PC-9 (cell line): ENCODE measurements at regions of chr1 and their contacts with region 1.

Region 1: DNA sequence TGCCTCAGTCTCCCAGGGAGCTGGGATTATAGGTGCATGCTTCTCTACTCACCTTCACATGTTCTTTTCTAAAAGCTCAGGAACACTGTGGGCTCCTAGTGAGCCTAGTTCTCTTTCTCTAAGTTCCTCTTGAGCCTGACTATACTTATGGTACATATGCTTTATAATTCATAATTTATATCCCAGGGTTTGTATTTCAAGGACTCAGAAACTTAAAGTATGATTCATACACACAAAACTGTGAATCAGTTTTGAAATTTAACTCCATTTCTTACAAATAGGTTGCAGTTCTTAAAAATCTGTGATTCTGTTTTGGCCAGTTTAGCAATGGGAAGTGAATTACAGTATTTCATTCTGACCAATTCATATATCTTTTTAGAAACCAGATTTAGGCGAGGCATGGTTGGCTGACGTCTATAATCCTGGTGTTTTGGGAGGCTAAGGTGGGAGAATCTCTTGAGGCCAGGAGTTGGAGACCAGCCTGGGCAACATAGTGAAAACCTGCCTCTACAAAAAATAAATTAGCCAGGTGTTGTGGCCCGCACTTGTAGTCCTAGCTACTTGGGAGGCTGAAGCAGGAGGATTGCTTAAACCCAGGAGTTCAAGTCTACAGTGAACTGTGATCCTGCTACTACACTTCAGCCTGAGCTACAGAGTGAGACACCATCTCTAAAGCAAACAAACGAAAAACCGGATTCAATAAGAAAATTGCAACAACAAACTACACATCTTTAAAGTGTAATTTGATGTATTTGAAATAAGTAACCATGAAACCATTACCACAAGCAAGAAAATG is 15.6 kb downstream of the RASAL2 start:
- DNase-seq: no peak
- H3K4me3 ChIP-seq: no peak overlapping the region
- H3K27ac ChIP-seq: peak overlapping the region; percentile 48
- H3K4me1 ChIP-seq: peaks cover 11% of the 10 kb centered on the region
- H3K27me3 ChIP-seq: no peaks in the 10 kb centered on the region
- CTCF ChIP-seq: no peak

Region 2: DNA sequence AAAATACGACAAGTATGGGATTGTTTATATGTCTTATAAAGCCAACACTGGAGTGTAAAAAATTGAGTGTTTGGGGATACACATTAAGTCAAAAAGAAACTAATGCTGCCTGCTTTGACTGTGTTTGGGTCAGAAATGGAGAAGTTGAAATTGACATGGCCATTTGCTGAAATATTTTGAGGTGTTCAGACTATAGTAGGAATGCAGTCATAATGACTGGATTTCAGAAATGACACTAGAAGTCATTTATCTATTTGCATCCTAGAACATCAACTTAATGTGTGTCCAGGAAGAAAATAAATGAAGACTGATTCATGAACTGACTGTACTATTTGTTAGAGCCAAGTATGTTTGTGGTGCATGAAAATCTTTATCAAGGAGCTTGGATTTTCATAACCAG is 12.7 kb after region 1 on chr1:
- CTCF ChIA-PET with region 1: no interaction called
- POLR2A ChIA-PET with region 1: no interaction called
- intact Hi-C with region 1: no loop called
- DNase-seq: no peak
- H3K4me3 ChIP-seq: no peak overlapping the region
- H3K27ac ChIP-seq: no peak overlapping the region
- H3K4me1 ChIP-seq: peaks cover 48% of the 10 kb centered on the region
- H3K27me3 ChIP-seq: no peaks in the 10 kb centered on the region
- CTCF ChIP-seq: no peak

Region 3: GRCh38 chr1:178629252-178630154 is 520.0 kb after region 1 on chr1:
- CTCF ChIA-PET with region 1: no interaction called
- POLR2A ChIA-PET with region 1: no interaction called
- intact Hi-C with region 1: no loop called
- DNase-seq: no peak
- H3K4me3 ChIP-seq: no peak overlapping the region
- H3K27ac ChIP-seq: no peak overlapping the region
- H3K4me1 ChIP-seq: 0 out of 2 replicates have a peak, but pooled peaks cover 13% of the 10 kb centered on the region
- H3K27me3 ChIP-seq: no peaks in the 10 kb centered on the region
- CTCF ChIP-seq: no peak

Region 4: GRCh38 chr1:178749581-178750166 is 640.1 kb after region 1 on chr1:
- CTCF ChIA-PET with region 1: no interaction called
- POLR2A ChIA-PET with region 1: no interaction called
- intact Hi-C with region 1: loop called (anchors 5 kb)
- DNase-seq: no peak
- H3K4me3 ChIP-seq: no peak overlapping the region
- H3K27ac ChIP-seq: no peak overlapping the region
- H3K4me1 ChIP-seq: no peaks in the 10 kb centered on the region
- H3K27me3 ChIP-seq: no peaks in the 10 kb centered on the region
- CTCF ChIP-seq: no peak